ENCODE measurements at regions of chr19 and their contacts with region 1.

Region 1: DNA sequence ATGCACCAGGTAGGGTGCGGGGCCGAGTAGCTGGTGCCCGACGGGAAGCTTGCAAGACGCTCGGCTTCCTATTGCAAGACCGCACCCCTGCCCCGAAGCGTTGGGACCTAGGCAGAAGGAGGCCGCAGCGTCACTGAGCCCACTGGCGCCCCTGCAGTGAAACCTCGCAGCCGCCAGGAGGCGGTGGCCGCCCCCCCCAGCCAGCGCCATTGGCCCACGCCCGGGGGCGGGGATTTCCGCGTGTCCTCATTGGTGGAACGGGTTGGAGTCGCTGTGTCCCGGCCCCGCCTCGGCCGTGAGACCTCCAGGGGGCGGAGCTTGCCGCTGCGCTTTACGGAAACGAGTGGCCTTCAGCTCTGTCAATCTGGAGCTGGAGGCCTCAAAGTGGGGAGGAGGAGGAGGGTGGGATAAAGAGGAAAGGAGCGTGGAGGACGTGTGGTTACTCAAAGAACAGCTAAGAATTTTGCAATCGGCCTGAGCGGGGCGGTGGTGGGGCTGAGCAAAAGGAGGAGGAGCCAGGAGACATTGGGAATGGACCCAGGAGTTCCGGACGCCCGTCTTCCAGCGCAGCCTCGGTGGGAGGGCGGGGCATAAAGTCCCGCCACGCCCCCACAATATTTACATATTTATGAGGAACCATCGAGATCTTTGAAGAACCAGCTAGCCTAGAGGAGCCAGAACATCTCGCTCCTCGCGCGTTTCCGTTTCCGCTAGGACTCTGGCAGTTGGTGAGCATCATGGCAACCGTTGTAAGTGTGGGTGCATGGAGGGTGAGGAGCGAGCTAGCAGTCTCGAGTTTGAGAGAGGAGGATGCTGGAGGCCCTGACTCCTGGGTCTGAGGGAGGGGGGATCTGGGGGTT is at the starts of genes GYS1 and RUVBL2:
- DNase-seq: peak; percentile 96
- ATAC-seq: peak; percentile 92
- H3K4me3 Mint-ChIP-seq: peak within 1 kb of the TSS; percentile 97
- H3K27ac Mint-ChIP-seq: peak within 1 kb of the TSS; percentile 97
- H3K4me1 Mint-ChIP-seq: peaks cover 33% of the 10 kb centered on the region
- H3K27me3 Mint-ChIP-seq: no peaks in the 10 kb centered on the region
- CTCF ChIP-seq: peak; percentile 94
- total RNA-seq, gene GYS1: 50.7 and 52.7 TPM in 2 replicates
- total RNA-seq, gene RUVBL2: 75.6 and 79.4 TPM in 2 replicates

Region 2: DNA sequence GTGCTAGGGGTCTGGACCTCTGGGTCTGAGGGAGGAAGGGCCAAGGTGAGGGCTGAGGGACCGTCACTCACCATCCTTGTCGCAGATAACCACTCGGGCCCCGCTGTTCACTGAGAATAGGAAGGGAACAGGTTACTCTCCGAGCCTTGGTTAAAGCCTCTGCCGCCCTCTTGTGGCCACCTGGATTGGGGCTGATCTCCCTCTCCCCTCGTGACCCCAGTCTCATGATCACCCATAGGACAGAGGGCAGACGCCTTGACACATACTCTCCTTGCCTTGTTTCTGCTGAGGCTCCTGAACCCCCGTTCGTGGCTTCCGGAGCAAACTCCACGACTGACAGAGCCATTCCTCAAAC is 157.7 kb before region 1 on chr19:
- CTCF ChIA-PET with region 1: no interaction called
- POLR2A ChIA-PET with region 1: interaction called, 10 read pairs
- intact Hi-C with region 1: no loop called
- DNase-seq: peak; percentile 89
- ATAC-seq: peak; percentile 86
- H3K4me3 Mint-ChIP-seq: peak overlapping the region; percentile 88
- H3K27ac Mint-ChIP-seq: peak overlapping the region; percentile 75
- H3K4me1 Mint-ChIP-seq: peaks cover 26% of the 10 kb centered on the region
- H3K27me3 Mint-ChIP-seq: no peaks in the 10 kb centered on the region
- CTCF ChIP-seq: no peak

Region 3: DNA sequence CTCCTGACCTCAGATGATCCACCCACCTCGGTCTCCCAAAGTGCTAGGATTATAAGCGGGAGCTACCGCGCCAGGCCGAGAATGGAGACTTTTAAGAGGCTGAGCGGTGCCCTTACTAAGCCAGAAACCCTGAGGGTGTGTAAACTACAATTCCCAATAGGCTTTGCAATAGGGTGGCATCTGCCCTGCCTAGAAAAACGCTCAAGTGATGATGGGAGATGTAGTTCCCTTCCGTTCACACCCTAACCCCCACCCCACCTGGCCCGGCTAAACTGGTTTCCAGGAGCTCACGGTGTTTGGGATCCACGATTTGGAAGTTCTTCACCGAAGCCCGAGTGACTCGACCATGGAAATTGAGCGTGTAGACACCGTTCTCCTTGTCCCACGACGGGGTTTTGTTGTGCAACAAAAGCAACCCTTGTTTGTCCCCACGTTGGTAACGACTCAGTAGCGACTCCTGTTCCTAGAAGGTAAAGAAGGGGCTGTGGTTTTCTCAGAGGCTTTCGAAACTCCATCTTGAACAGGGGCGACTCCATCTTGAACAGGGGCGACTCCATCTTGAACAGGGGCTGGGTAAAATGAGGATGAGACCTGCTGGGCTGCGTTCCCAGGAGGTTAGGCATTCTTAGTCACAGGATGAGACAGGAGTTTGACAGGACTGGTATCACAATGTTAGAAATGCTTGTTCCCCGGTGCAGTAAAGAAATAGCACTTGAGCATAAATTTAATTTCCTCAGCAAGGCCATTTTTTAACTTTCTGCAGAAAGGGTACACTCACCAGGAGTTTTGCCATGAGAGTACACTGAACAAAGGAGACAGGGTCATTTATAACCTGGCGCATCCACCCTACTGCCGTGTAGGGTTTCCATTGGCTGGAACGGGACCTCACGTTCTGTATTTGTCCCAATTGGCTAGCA is 111.4 kb before region 1 on chr19:
- CTCF ChIA-PET with region 1: no interaction called
- POLR2A ChIA-PET with region 1: interaction called, 10 read pairs
- intact Hi-C with region 1: no loop called
- DNase-seq: no peak
- ATAC-seq: peak; percentile 71
- H3K4me3 Mint-ChIP-seq: no peak overlapping the region
- H3K27ac Mint-ChIP-seq: peak overlapping the region; percentile 41
- H3K4me1 Mint-ChIP-seq: peaks cover 19% of the 10 kb centered on the region
- H3K27me3 Mint-ChIP-seq: no peaks in the 10 kb centered on the region
- CTCF ChIP-seq: no peak

Region 4: DNA sequence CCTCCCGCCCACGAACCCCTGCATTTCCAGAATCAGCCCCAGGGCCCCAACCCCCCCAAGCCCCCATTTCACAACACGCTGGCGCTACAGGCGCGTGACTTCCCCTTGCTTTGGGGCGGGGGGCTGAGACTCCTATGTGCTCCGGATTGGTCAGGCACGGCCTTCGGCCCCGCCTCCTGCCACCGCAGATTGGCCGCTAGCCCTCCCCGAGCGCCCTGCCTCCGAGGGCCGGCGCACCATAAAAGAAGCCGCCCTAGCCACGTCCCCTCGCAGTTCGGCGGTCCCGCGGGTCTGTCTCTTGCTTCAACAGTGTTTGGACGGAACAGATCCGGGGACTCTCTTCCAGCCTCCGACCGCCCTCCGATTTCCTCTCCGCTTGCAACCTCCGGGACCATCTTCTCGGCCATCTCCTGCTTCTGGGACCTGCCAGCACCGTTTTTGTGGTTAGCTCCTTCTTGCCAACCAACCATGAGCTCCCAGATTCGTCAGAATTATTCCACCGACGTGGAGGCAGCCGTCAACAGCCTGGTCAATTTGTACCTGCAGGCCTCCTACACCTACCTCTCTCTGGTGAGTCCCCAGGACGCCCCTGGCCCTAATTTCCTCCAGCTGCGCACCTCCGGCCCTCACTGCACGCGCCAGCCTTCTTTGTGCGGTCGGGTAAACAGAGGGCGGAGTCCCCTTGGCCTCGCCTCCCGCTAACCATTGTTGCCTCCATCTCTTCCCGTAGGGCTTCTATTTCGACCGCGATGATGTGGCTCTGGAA is 28.2 kb before region 1 on chr19 and contains the start of gene FTL:
- CTCF ChIA-PET with region 1: interaction called, 10 read pairs
- POLR2A ChIA-PET with region 1: interaction called, 29 read pairs
- intact Hi-C with region 1: loop called (anchors 2 kb)
- DNase-seq: peak; percentile 88
- ATAC-seq: peak; percentile 80
- H3K4me3 Mint-ChIP-seq: peak within 1 kb of the TSS; percentile 99
- H3K27ac Mint-ChIP-seq: peak within 1 kb of the TSS; percentile 99
- H3K4me1 Mint-ChIP-seq: peaks cover 70% of the 10 kb centered on the region
- H3K27me3 Mint-ChIP-seq: no peaks in the 10 kb centered on the region
- CTCF ChIP-seq: no peak
- total RNA-seq, gene FTL: 888 and 935 TPM in 2 replicates

Region 5: GRCh38 chr19:48975947-48976847 is 17.2 kb before region 1 on chr19:
- CTCF ChIA-PET with region 1: interaction called, 18 read pairs
- POLR2A ChIA-PET with region 1: interaction called, 31 read pairs
- intact Hi-C with region 1: loop called (anchors 1 kb)
- DNase-seq: no peak
- ATAC-seq: peak; percentile 64
- H3K4me3 Mint-ChIP-seq: no peak overlapping the region
- H3K27ac Mint-ChIP-seq: no peak overlapping the region
- H3K4me1 Mint-ChIP-seq: peaks cover 8% of the 10 kb centered on the region
- H3K27me3 Mint-ChIP-seq: no peaks in the 10 kb centered on the region
- CTCF ChIP-seq: no peak

Region 6: DNA sequence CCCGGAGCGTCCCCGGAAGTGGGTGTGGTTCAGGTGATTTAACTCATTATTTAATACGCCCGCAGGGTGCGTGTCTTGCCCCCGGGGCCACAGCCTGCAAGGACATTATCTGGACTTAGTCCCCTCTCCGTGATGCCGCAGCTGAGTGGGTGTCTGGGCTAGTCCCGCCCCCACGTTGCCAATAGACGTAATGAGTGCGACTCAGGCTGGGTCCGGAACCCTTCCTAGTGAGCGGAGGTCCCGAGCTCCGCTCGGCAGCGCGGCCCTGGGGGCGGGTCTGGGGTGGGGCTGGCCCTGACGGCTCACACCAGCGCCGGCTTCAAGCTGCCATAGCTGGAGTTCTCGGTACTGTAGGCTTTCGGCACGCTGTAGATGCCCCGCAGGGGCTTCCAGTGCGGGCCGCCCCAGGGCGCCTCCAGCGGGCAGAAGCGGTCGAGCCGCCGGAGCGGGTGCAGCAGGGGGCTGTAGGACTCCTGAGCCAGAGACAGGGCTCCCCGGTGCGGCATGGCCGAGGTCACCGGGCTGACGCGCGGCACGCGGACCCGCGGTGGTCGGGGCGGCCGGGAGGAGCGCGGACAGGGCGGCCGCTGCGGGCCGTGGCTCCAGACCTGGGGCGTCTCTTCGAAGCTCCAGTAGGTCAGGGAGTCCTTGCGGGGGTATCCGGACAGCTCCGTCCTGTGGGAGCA is 24.4 kb after region 1 on chr19:
- CTCF ChIA-PET with region 1: interaction called, 4 read pairs
- POLR2A ChIA-PET with region 1: interaction called, 7 read pairs
- intact Hi-C with region 1: loop called (anchors 2 kb)
- DNase-seq: peak; percentile 70
- ATAC-seq: peak; percentile 77
- H3K4me3 Mint-ChIP-seq: peak overlapping the region; percentile 87
- H3K27ac Mint-ChIP-seq: no peak overlapping the region
- H3K4me1 Mint-ChIP-seq: peaks cover 32% of the 10 kb centered on the region
- H3K27me3 Mint-ChIP-seq: peaks cover 3% of the 10 kb centered on the region
- CTCF ChIP-seq: no peak

Region 7: DNA sequence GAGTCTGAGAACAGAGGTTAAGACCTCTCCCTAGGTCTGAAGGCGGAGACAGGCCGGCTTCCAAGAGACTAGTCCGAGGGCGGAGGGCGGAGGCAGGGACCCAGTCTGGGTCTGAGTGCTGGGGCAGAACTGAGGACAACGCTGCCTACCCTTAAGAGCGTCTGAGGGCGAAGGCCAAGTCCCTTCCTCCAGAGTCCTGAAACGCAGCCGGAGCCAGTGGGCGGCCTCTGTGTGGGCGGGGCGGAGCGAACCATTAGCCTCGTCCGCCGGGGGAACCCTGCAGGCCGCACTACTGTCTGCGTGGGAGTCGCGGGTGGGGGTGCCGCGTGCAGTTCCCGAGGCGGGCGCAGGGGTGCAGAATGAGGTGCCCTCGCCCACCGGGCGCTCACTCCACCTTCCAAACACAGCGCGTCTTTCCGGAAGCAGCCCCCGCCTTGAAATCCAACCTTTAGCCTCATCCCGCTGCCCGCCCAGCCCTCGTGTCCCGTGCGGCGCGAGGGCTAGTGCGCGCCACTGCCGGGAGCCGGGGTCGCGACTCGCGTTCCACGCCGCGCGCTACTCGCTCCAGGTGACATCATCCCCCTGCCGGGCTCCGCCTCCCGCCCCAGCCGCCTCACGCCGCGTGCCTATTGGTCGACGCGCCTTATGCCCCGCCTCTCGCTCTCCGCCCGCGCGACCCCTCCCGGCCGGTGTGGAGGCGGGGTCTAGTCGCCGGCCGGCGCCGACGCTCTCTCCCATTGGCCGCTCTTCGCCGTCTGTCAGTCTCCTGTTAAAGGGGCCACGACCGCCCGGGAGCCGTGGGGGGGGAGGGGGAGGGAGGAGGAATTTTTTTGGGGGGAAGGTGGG is 125.4 kb after region 1 on chr19 and contains the start of gene C19orf73:
- CTCF ChIA-PET with region 1: interaction called, 3 read pairs
- POLR2A ChIA-PET with region 1: interaction called, 3 read pairs
- intact Hi-C with region 1: loop called (anchors 10 kb)
- DNase-seq: peak; percentile 96
- ATAC-seq: peak; percentile 82
- H3K4me3 Mint-ChIP-seq: peak within 1 kb of the TSS; percentile 84
- H3K27ac Mint-ChIP-seq: peak within 1 kb of the TSS; percentile 87
- H3K4me1 Mint-ChIP-seq: peaks cover 44% of the 10 kb centered on the region
- H3K27me3 Mint-ChIP-seq: peaks cover 7% of the 10 kb centered on the region
- CTCF ChIP-seq: no peak
- total RNA-seq, gene C19orf73: 0.98 and 1.0 TPM in 2 replicates

Measured in activated B cell treated with CpG ODN at 0.5 μM for 24 hours (primary cell).